ENCODE measurements at regions of chr15 and their contacts with region 1.

Region 1: DNA sequence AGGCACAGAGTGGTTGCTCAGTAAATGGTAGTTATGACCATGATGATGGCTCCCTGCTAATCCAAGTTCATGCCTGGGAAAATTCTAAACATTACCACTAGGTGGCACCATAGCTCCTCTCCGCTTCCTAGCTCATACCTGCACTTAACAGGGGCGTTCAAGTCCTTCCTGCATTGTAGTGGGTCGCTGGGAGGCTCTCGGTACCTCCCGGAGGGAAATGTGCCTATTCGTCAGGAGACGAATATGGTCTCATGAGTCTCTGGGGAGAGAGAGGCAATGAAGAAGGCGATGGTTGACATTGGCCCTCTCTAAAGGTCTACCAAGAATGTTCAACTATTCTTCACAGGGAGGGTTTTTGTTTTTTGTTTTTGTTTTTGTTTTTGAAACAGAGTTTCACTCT is 10.9 kb downstream of the MESP1 start:
- DNase-seq: peak; percentile 79
- H3K4me3 ChIP-seq: peak overlapping the region; percentile 34
- H3K27ac ChIP-seq: no peak overlapping the region
- H3K4me1 ChIP-seq: no peaks in the 10 kb centered on the region
- CTCF ChIP-seq: peak; percentile 93

Region 2: GRCh38 chr15:89157918-89158564 is 582.1 kb before region 1 on chr15:
- CTCF ChIA-PET with region 1: no interaction called
- POLR2A ChIA-PET with region 1: no interaction called
- intact Hi-C with region 1: no loop called
- DNase-seq: no peak
- H3K4me3 ChIP-seq: no peak overlapping the region
- H3K27ac ChIP-seq: no peak overlapping the region
- H3K4me1 ChIP-seq: no peaks in the 10 kb centered on the region
- CTCF ChIP-seq: no peak

Region 3: DNA sequence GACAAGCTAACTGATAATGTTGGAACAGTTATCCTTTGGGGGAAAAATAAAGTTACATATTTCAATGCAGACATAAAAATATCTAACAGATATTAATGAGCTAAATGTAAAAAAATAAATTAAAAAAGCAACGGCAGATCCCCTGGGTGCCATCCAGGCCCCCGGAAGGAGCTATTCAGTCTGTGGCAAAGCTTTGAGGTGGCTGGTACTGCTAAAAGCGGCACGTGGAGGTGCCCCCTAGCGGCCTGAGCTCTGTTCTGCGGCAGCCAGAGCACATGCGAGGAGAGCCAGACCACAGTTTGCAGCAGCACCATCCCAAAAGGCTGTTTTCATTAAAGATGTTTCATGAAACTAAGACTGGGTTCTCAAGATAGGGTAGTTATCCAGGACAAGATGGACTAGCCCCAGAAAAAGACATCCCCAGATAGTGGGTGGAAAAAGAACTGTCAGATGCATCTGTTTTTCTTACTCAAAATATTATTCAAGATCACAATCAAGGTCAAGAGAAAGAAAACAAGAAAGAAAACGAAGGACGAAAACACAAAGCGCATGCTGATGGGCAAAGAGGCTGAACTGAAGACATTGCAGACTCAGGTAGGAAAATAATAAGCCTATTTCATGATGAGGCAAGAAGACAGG is 134.9 kb after region 1 on chr15:
- CTCF ChIA-PET with region 1: no interaction called
- POLR2A ChIA-PET with region 1: no interaction called
- intact Hi-C with region 1: loop called (anchors 1 kb)
- DNase-seq: peak; percentile 87
- H3K4me3 ChIP-seq: no peak overlapping the region
- H3K27ac ChIP-seq: no peak overlapping the region
- H3K4me1 ChIP-seq: peaks cover 5% of the 10 kb centered on the region
- CTCF ChIP-seq: peak; percentile 99

Region 4: GRCh38 chr15:90071208-90071807 is 331.2 kb after region 1 on chr15:
- CTCF ChIA-PET with region 1: no interaction called
- POLR2A ChIA-PET with region 1: no interaction called
- intact Hi-C with region 1: loop called (anchors 5 kb)
- DNase-seq: peak; percentile 88
- H3K4me3 ChIP-seq: no peak overlapping the region
- H3K27ac ChIP-seq: no peak overlapping the region
- H3K4me1 ChIP-seq: peaks cover 20% of the 10 kb centered on the region
- CTCF ChIP-seq: peak; percentile 95

Region 5: DNA sequence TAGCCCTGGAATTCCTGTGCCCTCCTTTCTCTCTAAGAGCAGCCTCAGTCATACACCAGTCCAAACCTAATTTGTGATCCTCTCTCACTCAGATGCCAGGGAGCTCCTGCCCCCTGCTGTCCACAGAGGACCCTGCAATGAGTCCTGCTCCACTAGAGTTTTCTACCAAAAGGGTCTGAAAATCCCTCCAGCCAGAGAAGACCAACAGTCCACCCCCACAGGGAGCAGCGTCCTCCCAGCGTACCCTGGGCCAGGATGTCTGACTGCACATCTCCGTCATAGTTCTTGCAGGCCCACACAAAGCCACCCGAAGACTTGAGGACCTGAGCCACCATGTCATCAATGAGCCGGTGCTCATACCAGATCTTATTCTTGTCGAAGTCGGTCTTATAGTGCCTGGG is 346.7 kb after region 1 on chr15:
- CTCF ChIA-PET with region 1: no interaction called
- POLR2A ChIA-PET with region 1: no interaction called
- intact Hi-C with region 1: loop called (anchors 5 kb)
- DNase-seq: peak; percentile 69
- H3K4me3 ChIP-seq: no peak overlapping the region
- H3K27ac ChIP-seq: no peak overlapping the region
- H3K4me1 ChIP-seq: peaks cover 27% of the 10 kb centered on the region
- CTCF ChIP-seq: peak; percentile 95

Measured in OCI-LY7 (cell line).